ENCODE measurements at regions of chr22 and their contacts with region 1.

Region 1: GRCh38 chr22:38506118-38506962 is at the start of gene DDX17:
- DNase-seq: peak; percentile 98
- H3K4me3 Mint-ChIP-seq: peak within 1 kb of the TSS; percentile 99
- H3K27ac Mint-ChIP-seq: peak within 1 kb of the TSS; percentile 99
- H3K4me1 Mint-ChIP-seq: peaks cover 40% of the 10 kb centered on the region
- H3K27me3 Mint-ChIP-seq: no peaks in the 10 kb centered on the region
- total RNA-seq, gene DDX17: 373 and 374 TPM in 2 replicates

Region 2: DNA sequence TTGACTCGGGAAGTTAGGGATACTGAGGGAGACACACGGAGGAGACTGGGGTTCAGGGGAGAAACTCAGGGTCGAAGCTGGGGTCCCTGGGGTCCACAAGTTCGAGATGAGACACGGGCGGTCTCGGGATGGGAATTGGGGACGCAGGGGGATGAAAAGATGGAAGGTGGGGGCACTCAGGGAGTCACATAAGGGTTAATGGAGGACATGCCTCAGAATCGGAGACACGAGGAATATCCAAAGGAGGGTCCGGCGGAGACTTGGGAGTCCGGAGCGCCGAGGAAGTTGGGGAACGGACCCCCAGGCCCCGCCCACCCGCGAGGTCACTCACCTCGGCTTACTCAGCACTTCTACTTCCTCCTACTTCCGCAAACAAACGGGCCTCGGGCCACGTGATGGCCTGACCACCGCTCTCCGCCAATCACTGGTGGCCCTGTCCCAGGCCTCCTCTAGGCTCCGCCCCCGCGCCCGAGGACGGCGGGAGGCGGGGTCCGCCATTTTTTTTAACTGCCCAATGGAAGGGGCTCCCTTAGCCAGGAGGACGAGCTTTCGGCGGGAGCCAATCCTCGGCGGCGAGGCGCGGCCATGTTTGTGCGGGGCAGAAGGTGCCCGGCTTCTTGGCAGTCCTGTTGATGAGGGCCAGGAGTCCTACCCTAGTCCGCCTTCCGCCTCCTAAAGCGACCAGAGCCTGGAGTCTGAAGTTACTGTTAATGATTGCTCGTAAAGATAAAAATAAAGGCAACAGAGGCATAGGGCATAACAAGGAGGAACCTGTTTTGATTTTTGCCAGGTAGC is 324.7 kb before region 1 on chr22 and contains the start of gene PLA2G6:
- intact Hi-C with region 1: loop called (anchors 5 kb)
- DNase-seq: peak; percentile 100
- H3K4me3 Mint-ChIP-seq: peak within 1 kb of the TSS; percentile 98
- H3K27ac Mint-ChIP-seq: peak within 1 kb of the TSS; percentile 98
- H3K4me1 Mint-ChIP-seq: peaks cover 37% of the 10 kb centered on the region
- H3K27me3 Mint-ChIP-seq: peaks cover 8% of the 10 kb centered on the region
- total RNA-seq, gene PLA2G6: 34.3 and 43.2 TPM in 2 replicates

Region 3: GRCh38 chr22:38461414-38462081 is 44.8 kb before region 1 on chr22:
- intact Hi-C with region 1: loop called (anchors 2 kb)
- DNase-seq: peak; percentile 92
- H3K4me3 Mint-ChIP-seq: peak overlapping the region; percentile 15
- H3K27ac Mint-ChIP-seq: no peak overlapping the region
- H3K4me1 Mint-ChIP-seq: peaks cover 4% of the 10 kb centered on the region
- H3K27me3 Mint-ChIP-seq: peaks cover 84% of the 10 kb centered on the region

Region 4: DNA sequence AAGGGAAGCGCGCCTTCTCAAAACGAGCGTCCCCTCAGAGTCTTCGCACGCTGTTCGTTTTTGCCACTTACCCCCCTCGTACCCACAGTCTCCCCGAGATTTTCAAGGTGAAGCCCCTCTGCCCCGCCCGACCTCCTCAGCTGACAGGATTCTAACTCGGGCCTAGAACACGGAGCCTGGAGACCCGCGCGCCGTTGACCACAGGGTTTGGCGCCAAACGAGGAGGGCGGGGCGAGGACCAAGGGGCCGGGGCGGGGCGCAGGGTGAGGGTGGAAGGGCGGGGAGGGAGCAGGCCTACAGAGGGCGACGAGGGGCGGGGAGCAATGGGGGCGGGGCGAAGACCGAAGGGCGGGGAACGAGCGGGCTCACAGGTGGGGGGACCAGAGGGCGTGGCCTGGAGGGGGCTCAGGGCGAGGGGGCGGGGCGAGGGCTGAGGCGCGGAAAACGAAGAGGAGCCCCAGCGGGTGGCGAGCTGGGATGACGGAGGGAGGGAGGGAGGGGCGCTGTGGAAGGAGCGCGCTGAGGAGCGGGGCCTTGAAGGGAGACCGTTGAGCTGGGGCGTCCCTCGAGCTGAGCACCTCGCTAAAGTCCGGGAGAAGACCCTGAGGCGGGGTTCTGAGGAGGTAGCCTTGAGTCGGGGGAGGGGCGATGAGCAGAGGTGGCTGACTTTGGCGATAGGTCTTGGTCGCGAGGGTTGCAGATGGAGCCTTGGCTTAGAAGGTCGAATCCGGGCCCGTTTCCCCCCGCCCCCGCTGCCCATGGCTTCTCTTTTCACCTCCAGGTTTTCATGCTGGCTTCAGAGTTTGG is 63.8 kb after region 1 on chr22 and contains the start of gene DMC1:
- intact Hi-C with region 1: loop called (anchors 1 kb)
- DNase-seq: peak; percentile 97
- H3K4me3 Mint-ChIP-seq: peak within 1 kb of the TSS; percentile 94
- H3K27ac Mint-ChIP-seq: peak within 1 kb of the TSS; percentile 92
- H3K4me1 Mint-ChIP-seq: peaks cover 22% of the 10 kb centered on the region
- H3K27me3 Mint-ChIP-seq: peaks cover 3% of the 10 kb centered on the region
- total RNA-seq, gene DMC1: 14.2 and 14.3 TPM in 2 replicates

Region 5: GRCh38 chr22:38705235-38706100 is 199.1 kb after region 1 on chr22 and contains the start of gene GTPBP1:
- intact Hi-C with region 1: loop called (anchors 5 kb)
- DNase-seq: peak; percentile 99
- H3K4me3 Mint-ChIP-seq: peak within 1 kb of the TSS; percentile 81
- H3K27ac Mint-ChIP-seq: peak within 1 kb of the TSS; percentile 98
- H3K4me1 Mint-ChIP-seq: peaks cover 54% of the 10 kb centered on the region
- H3K27me3 Mint-ChIP-seq: peaks cover 4% of the 10 kb centered on the region
- total RNA-seq, gene GTPBP1: 102 and 103 TPM in 2 replicates

Region 6: DNA sequence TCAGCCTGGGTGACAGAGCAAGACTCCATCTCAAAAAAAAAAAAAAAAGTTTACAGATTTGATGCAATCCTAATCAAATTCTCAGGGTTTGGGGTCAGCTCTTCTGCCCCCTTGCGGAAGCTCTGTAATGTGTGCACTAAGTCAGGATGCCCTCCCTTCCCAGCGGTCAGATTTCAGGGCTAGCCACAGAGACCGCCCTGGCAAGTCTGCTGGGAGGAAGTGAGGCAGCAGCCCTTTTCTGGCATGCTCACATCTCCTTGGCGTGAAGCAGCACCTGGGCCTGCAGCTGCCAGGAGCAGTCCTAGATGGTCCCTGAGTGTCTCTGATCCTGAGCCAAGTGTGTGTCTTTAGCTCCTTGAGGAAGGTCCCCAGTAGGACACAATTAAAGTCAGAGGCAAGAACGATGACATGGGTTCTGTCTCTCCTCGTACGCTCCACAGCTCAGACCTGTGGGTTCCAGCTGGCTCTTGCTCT is 496.9 kb after region 1 on chr22:
- intact Hi-C with region 1: no loop called
- DNase-seq: peak; percentile 92
- H3K4me3 Mint-ChIP-seq: no peak overlapping the region
- H3K27ac Mint-ChIP-seq: peak overlapping the region; percentile 69
- H3K4me1 Mint-ChIP-seq: peaks cover 9% of the 10 kb centered on the region
- H3K27me3 Mint-ChIP-seq: peaks cover 13% of the 10 kb centered on the region